ENCODE measurements at regions of chr4 and their contacts with region 1.

Region 1: GRCh38 chr4:164215113-164215741 is 538.7 kb upstream of the SMIM31 start:
- DNase-seq: no peak
- ATAC-seq: no peak
- H3K4me3 ChIP-seq: no peak overlapping the region
- H3K4me3 Mint-ChIP-seq: no peak overlapping the region
- H3K27ac ChIP-seq: no peak overlapping the region
- H3K27ac Mint-ChIP-seq: no peak overlapping the region
- H3K4me1 ChIP-seq: no peaks in the 10 kb centered on the region
- H3K4me1 Mint-ChIP-seq: no peaks in the 10 kb centered on the region
- H3K27me3 ChIP-seq: no peaks in the 10 kb centered on the region
- H3K27me3 Mint-ChIP-seq: peaks cover 0 to 4% (median 0%) of the 10 kb centered on the region in 5 donors

Region 2: GRCh38 chr4:163895378-163896005 is 319.7 kb before region 1 on chr4:
- CTCF ChIA-PET with region 1: no interaction called
- POLR2A ChIA-PET with region 1: no interaction called
- intact Hi-C with region 1: no loop called
- DNase-seq: peak in 7 of 9 donors; percentile 25 to 84 (median 43)
- ATAC-seq: peak; percentile 71
- H3K4me3 ChIP-seq: no peak overlapping the region
- H3K4me3 Mint-ChIP-seq: peak overlapping the region in 8 of 10 donors; percentile 24 to 65 (median 51)
- H3K27ac ChIP-seq: no peak overlapping the region
- H3K27ac Mint-ChIP-seq: peak overlapping the region in 7 of 9 donors; percentile 22 to 85 (median 63)
- H3K4me1 ChIP-seq: peaks cover 0 to 5% of the 10 kb centered on the region in 2 donors
- H3K4me1 Mint-ChIP-seq: peaks cover 0 to 43% (median 27%) of the 10 kb centered on the region in 7 donors
- H3K27me3 ChIP-seq: no peaks in the 10 kb centered on the region
- H3K27me3 Mint-ChIP-seq: peaks cover 0 to 7% (median 0%) of the 10 kb centered on the region in 5 donors

Region 3: DNA sequence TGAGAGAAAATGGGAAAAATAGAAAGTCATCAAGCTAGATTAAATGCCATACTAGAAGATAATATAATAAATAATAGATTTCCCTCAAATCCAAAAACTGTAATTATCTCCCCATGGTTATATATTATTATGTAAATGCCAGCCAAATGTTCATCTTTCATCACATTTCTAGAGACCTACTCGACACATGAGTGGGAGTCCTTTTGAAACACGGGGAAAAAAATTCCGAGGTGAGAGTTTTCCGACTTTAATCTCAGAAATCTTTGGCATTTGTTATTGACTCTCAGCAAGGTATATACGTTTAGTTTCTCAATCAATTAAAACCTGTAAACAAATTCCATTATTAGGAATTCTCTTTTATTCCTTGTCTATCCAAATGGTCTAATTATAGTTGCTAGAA is 73.4 kb after region 1 on chr4:
- CTCF ChIA-PET with region 1: no interaction called
- POLR2A ChIA-PET with region 1: no interaction called
- intact Hi-C with region 1: loop called in 1 of 2 experiments (anchors 2 kb)
- DNase-seq: no peak
- ATAC-seq: no peak
- H3K4me3 ChIP-seq: no peak overlapping the region
- H3K4me3 Mint-ChIP-seq: no peak overlapping the region
- H3K27ac ChIP-seq: no peak overlapping the region
- H3K27ac Mint-ChIP-seq: no peak overlapping the region
- H3K4me1 ChIP-seq: no peaks in the 10 kb centered on the region
- H3K4me1 Mint-ChIP-seq: no peaks in the 10 kb centered on the region
- H3K27me3 ChIP-seq: no peaks in the 10 kb centered on the region
- H3K27me3 Mint-ChIP-seq: no peaks in the 10 kb centered on the region

Measured in naive thymus-derived CD4-positive, alpha-beta T cell (primary cell).